Activated CD8-positive, alpha-beta T cell treated with anti-CD3 and anti-CD28 coated beads for 36 hours (primary cell): ENCODE measurements at regions of chr1 and their contacts with region 1.

Region 1: DNA sequence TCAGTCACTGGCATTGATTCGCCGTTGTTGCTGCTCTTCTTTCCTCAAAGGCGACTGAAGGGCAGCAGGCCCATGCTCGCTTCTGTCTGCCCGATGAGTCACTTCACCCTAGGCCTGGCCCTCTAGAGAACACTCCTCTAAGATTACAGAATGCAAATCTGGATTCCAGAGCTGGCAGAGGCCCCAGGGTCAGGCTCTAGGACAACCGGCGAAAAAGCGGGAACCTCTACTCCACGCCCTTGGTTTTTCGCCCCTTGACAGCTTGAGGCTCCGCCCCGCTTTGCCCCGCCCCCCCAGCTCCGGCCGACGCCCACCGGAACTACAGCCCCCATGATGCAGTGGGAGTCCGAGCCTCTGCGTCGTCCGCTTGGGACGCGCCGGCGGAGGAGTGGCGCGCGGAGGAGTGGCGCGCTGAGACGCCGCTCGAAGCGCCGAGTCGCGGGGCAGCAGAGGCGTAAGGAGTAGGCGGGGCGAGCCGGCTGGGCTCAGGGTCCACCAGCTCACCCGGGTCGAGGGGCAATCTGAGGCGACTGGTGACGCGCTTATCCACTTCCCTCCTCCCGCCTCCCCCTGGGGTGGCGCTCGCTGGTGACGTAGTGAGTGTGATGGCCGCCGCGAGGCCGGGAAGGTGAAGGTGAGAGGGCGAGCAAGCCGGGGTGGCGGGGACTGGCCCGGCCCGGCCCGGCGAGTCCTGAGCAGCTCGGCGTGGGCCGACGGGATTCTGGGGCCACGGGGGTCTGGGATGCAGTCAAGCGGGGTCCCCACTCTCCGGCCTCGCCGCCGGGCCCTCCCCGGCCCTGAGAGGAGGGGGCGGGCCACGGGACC is at the start of gene MFN2:
- DNase-seq: peak; percentile 97
- ATAC-seq: peak; percentile 93
- H3K4me3 Mint-ChIP-seq: peak within 1 kb of the TSS; percentile 92
- H3K27ac Mint-ChIP-seq: peak within 1 kb of the TSS; percentile 89
- H3K4me1 Mint-ChIP-seq: peaks cover 28% of the 10 kb centered on the region
- H3K27me3 Mint-ChIP-seq: no peaks in the 10 kb centered on the region
- CTCF ChIP-seq: no peak
- total RNA-seq, gene MFN2: 51.0 to 51.1 TPM

Region 2: GRCh38 chr1:12001249-12001917 is 21.3 kb after region 1 on chr1:
- CTCF ChIA-PET with region 1: interaction called, 3 read pairs
- POLR2A ChIA-PET with region 1: interaction called, 12 read pairs
- intact Hi-C with region 1: no loop called
- DNase-seq: peak; percentile 87
- ATAC-seq: peak; percentile 68
- H3K4me3 Mint-ChIP-seq: no peak overlapping the region
- H3K27ac Mint-ChIP-seq: peak overlapping the region; percentile 79
- H3K4me1 Mint-ChIP-seq: no peaks in the 10 kb centered on the region
- H3K27me3 Mint-ChIP-seq: no peaks in the 10 kb centered on the region
- CTCF ChIP-seq: peak; percentile 73

Region 3: DNA sequence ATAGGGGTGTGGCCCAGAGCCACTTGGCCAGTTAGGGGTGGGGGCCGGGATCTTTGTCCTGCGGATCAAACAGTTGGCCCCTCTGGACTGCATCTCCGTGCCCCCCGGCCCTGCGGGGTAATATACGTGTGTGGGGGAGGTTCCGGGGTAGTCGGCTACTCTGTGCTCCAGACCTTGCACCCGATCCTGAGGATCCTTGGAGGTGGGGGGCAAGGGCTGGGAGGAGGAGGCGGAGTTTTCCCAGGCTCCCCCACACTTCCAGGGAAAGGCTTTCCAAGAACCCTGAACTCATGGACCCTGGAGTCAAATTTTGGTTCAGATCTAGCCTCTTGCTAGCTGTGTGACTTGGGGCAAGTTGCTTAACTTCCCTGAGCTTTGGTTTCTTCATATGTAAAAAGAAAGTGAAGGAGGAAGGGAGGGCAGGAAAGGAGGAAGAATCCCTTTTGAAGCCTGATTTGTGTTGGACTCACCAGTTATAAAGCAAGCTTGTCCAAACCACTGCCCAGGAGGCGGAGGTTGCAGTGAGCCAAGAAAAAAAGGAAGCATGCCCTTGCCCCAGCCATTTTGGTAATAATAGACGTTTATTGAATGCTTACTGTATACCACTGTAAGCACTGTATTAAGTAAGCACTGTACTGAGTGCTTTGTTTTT is 39.9 kb after region 1 on chr1:
- CTCF ChIA-PET with region 1: no interaction called
- POLR2A ChIA-PET with region 1: interaction called, 10 read pairs
- intact Hi-C with region 1: no loop called
- DNase-seq: no peak
- ATAC-seq: no peak
- H3K4me3 Mint-ChIP-seq: peak overlapping the region; percentile 81
- H3K27ac Mint-ChIP-seq: peak overlapping the region; percentile 49
- H3K4me1 Mint-ChIP-seq: peaks cover 5% of the 10 kb centered on the region
- H3K27me3 Mint-ChIP-seq: no peaks in the 10 kb centered on the region
- CTCF ChIP-seq: no peak